ENCODE measurements at regions of chr12 and their contacts with region 1.

Region 1: GRCh38 chr12:109775172-109775881 is 57.9 kb downstream of the TRPV4 start:
- DNase-seq: peak; percentile 70 to 89
- ATAC-seq: peak; percentile 82 to 93
- H3K4me3 ChIP-seq: no peak overlapping the region
- H3K27ac ChIP-seq: no peak overlapping the region
- H3K4me1 ChIP-seq: no peaks in the 10 kb centered on the region
- CTCF ChIP-seq: peak; percentile 95
- EP300 ChIP-seq: no peak
- POLR2A ChIP-seq: no peak
- RAD21 ChIP-seq: peak; percentile 95 to 98

Region 2: DNA sequence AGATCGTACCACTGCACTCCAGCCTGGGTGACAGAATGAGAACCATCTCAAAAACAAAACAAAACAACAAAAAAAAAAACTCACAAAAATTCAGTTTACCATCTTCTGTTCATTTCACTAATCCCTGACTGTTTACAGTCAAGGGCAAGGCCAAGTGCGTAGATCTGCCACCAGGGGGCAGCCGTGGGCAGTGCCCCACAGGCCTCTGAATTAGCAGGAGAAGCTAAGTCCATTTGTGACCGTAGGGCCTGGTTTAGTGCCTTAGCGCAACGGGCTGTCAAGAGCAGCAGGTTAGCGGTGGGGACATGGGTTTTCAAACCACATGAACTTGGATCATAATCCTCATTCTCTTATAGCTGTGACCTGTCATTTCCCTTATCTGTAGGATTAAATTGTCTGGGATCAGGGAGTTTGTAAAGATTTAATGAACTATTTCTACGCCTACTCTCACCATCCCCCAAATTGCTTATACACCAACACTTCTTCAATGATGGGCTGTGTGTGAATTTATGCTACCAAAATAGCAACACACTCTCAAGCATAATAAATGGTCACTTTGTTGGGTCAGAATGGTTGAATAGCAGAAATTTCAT is 347.2 kb before region 1 on chr12:
- CTCF ChIA-PET with region 1: interaction called, 16 read pairs
- POLR2A ChIA-PET with region 1: no interaction called
- DNase-seq: peak; percentile 74 to 85
- ATAC-seq: peak; percentile 80 to 88
- H3K4me3 ChIP-seq: no peak overlapping the region
- H3K27ac ChIP-seq: no peak overlapping the region
- H3K4me1 ChIP-seq: 0 out of 3 replicates have a peak, but pooled peaks cover 3% of the 10 kb centered on the region
- CTCF ChIP-seq: peak; percentile 92
- EP300 ChIP-seq: no peak
- POLR2A ChIP-seq: no peak
- RAD21 ChIP-seq: peak; percentile 57 to 72

Region 3: GRCh38 chr12:109518820-109519665 is 256.3 kb before region 1 on chr12:
- CTCF ChIA-PET with region 1: interaction called, 167 read pairs
- POLR2A ChIA-PET with region 1: interaction called, 3 read pairs
- DNase-seq: peak; percentile 48 to 80
- ATAC-seq: peak; percentile 64 to 91; a peak in 4 of 6 replicates
- H3K4me3 ChIP-seq: no peak overlapping the region
- H3K27ac ChIP-seq: no peak overlapping the region
- H3K4me1 ChIP-seq: no peaks in the 10 kb centered on the region
- CTCF ChIP-seq: peak; percentile 86
- EP300 ChIP-seq: no peak
- POLR2A ChIP-seq: no peak
- RAD21 ChIP-seq: peak; percentile 74 to 82

Region 4: DNA sequence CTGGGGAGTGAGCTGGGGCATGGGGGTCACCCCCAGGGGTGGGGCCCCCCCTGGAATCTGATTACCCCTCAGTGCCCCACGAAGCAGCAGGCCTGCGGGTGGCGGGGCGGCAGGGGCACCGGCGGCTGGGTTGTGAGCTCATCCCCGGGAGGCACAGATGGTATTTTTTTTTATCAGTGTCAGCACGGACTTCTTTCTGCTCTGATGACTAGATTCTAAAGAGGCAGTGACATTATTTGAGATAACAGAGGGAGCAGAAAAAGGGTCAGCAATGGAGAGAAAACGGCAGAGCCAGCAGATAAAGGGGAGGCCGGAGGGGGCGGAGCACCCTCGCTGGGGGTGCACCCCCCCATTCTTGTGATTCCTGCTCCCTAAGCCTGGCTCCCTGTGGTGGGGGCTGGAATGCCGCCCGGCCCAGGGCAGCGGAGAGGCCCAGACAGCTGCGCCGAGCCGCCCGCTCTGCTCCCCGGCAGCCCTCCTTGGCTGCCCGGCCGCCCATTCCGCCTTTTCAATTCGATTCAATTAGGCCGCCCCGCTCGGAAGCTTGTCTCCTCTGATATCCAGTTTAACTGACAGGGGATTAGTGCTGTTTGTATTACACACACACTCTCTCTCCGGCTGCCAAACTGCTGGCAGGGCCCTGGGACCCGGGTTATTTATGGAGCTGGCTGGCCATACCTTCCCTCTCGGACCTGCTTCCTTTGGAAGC is 168.9 kb before region 1 on chr12:
- CTCF ChIA-PET with region 1: interaction called, 16 read pairs
- POLR2A ChIA-PET with region 1: no interaction called
- DNase-seq: no peak
- ATAC-seq: no peak
- H3K4me3 ChIP-seq: no peak overlapping the region
- H3K27ac ChIP-seq: no peak overlapping the region
- H3K4me1 ChIP-seq: no peaks in the 10 kb centered on the region
- CTCF ChIP-seq: no peak
- EP300 ChIP-seq: no peak
- POLR2A ChIP-seq: no peak
- RAD21 ChIP-seq: no peak

Region 5: DNA sequence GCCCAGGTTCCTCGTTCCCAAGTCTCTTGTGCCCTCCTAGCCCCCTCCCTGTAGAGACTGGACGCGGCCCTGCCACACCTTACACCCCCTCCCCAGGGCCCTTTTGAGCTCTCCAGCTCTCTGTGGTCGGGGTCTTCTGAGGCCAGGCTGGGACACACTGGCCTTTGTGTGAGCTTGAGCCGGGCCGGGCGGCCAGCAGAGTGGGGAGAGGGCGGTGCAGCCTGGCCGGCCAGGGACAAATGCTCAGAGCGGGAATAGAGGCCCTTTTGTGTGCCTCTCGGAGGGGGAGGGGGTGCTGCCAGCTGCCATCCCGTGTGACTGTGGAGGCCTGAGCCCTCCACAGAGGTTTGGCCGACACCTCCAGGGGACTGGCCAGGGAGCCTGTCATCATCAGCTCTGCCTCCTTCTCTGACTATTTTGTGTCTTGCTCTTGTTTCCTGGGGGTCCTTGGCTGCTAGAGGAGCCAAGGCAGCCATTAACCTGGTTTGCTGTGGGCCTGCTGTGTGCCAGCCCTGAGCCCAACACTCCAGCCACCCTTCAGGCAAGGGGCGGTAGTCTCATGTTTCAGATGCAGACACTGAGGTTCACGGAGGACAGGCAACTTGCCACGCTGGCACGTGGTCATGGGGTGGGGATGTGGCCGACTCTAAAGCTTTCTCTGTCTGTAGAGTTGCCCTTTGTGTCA is 48.1 kb before region 1 on chr12:
- CTCF ChIA-PET with region 1: interaction called, 14 read pairs
- POLR2A ChIA-PET with region 1: no interaction called
- DNase-seq: no peak
- ATAC-seq: no peak
- H3K4me3 ChIP-seq: no peak overlapping the region
- H3K27ac ChIP-seq: no peak overlapping the region
- H3K4me1 ChIP-seq: no peaks in the 10 kb centered on the region
- CTCF ChIP-seq: no peak
- EP300 ChIP-seq: no peak
- POLR2A ChIP-seq: no peak
- RAD21 ChIP-seq: no peak

Region 6: GRCh38 chr12:109797905-109798669 is 22.8 kb after region 1 on chr12:
- CTCF ChIA-PET with region 1: interaction called, 18 read pairs
- POLR2A ChIA-PET with region 1: no interaction called
- DNase-seq: peak in 1 of 2 experiments; percentile 46
- ATAC-seq: peak in 1 of 2 experiments; percentile 78; a peak in 3 of 6 replicates
- H3K4me3 ChIP-seq: no peak overlapping the region
- H3K27ac ChIP-seq: no peak overlapping the region
- H3K4me1 ChIP-seq: peaks cover 9% of the 10 kb centered on the region; the same call in 2 of the 3 replicates
- CTCF ChIP-seq: peak; percentile 30; the same call in 2 of the 3 replicates
- EP300 ChIP-seq: no peak
- POLR2A ChIP-seq: no peak
- RAD21 ChIP-seq: peak in 1 of 2 experiments; percentile 12; a peak in 1 of 5 replicates

Measured in A549 (cell line).